OCI-LY7 (cell line): ENCODE measurements at regions of chr1 and their contacts with region 1.

Region 1: DNA sequence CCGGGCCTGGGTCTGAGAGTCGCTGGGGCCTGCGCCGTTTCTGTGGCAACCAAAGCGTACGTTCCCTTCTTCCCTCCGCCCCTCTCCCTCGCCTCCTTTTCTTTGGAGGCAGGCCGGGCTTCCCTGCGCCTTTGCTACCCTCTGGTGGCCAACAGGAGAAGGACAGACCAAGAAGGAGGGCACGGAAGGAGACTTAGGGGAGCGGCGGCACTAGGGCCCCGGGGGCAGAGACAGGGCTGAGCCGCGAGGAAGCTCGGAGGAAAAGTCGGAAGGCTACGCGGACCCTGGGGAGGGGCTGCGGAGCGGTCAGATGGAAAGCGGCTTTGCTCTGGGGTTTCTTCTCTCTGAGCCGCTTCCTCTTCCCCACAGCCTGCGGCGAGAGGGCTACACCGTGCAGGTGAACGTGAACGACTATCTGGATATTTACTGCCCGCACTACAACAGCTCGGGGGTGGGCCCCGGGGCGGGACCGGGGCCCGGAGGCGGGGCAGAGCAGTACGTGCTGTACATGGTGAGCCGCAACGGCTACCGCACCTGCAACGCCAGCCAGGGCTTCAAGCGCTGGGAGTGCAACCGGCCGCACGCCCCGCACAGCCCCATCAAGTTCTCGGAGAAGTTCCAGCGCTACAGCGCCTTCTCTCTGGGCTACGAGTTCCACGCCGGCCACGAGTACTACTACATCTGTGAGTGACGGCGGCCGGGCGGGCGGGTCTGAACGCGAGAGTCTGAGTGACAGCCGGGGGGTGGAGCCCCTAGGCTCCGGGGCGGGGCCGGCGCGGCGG is 6.3 kb downstream of the EFNA3 start:
- DNase-seq: peak; percentile 94
- H3K4me3 ChIP-seq: peak overlapping the region; percentile 81
- H3K27ac ChIP-seq: peak overlapping the region; percentile 87
- H3K4me1 ChIP-seq: peaks cover 45% of the 10 kb centered on the region
- CTCF ChIP-seq: peak; percentile 87

Region 2: GRCh38 chr1:154669464-154670282 is 415.2 kb before region 1 on chr1:
- CTCF ChIA-PET with region 1: no interaction called
- POLR2A ChIA-PET with region 1: no interaction called
- intact Hi-C with region 1: loop called (anchors 1 kb)
- DNase-seq: peak; percentile 89
- H3K4me3 ChIP-seq: no peak overlapping the region
- H3K27ac ChIP-seq: no peak overlapping the region
- H3K4me1 ChIP-seq: peaks cover 8% of the 10 kb centered on the region
- CTCF ChIP-seq: peak; percentile 97

Region 3: DNA sequence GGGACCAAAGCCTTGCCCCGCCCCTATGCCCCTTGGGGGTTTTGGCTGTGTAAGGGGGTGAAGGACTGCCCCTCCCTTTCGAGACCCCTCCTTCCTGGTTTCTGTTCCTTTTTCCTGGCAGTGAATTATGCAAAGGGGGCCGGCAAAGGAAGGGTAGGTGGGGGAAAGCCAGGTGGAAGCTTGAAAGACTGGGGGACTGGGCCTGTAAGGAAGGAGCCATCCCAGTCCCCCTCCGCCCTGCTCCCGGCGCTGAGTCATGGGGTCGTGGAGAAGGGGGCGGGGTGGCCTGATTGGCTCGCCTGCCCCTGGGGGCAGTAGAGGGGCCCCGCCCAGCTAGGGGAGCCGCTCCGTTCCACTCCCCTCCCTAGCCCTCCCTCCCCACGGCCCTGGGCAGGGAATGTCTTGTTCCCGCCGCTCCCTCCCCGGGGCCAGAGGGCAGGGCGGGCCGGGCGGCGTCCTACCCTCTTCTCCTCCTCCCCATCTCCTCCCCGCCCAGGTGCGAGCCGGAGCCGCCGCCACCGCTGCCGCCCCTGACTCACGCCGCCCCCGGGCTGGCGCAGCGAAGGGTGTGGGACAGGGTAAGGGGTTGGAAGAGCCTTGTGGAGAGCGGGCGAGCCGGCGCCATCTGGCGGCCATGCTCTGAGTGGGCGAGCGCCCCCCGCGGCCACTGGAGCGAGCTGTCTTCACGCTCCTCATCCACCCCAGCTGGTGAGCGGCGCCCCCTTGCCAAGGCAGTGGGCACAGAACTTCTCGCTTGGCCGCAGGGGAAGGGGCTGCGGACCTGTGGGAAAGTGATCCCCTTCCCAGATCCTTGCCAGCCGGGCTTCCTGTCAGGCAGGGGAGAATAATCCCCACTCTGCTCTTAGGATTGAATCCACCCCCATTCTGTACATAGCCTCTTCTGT is 67.6 kb before region 1 on chr1:
- CTCF ChIA-PET with region 1: no interaction called
- POLR2A ChIA-PET with region 1: no interaction called
- intact Hi-C with region 1: loop called (anchors 2 kb)
- DNase-seq: peak; percentile 89
- H3K4me3 ChIP-seq: peak overlapping the region; percentile 64
- H3K27ac ChIP-seq: peak overlapping the region; percentile 79
- H3K4me1 ChIP-seq: peaks cover 66% of the 10 kb centered on the region
- CTCF ChIP-seq: peak; percentile 100

Region 4: DNA sequence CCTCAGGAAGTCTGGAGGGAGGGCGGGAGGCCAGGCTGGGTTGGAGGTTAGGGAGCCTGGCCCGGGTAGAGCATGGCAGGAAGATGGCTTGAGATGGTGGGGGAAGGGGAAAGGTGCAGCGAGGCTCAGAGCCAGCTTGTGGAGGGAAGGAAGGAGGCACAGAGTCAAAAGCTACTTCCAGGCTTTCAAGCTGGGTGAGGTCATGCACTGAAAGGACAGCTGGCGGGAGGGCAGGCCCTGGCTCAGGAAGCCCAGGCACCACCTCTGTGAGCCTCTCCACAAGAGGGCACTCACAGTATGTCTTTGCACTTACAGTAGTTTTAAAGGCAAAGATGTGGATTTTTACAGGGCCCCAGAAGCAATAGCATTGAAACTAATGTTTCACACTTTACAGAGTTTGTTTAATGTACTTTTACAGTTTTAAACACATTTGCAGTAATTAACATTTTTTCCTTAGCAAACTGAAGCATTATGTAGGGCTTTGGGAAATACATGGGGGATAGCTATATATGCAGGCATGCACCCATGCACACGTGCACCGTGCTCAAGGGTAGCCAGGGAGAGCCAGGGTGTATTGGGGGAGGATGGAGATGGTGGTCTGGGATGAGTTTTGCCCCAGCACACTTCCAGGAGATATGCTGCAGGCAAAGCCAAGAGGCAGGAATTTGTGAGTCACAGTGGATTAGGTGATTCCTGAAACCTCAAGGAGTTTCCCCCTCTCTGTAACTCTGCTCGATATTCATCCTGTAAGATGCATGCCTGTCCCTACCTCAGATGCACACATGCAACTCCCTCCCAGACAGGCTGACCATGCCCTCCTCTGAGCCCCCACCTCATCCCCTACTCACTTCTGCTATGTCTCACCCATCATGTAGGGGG is 39.9 kb before region 1 on chr1:
- CTCF ChIA-PET with region 1: interaction called, 11 read pairs
- POLR2A ChIA-PET with region 1: no interaction called
- intact Hi-C with region 1: loop called (anchors 1 kb)
- DNase-seq: peak; percentile 81
- H3K4me3 ChIP-seq: no peak overlapping the region
- H3K27ac ChIP-seq: no peak overlapping the region
- H3K4me1 ChIP-seq: peaks cover 11% of the 10 kb centered on the region
- CTCF ChIP-seq: peak; percentile 88